SK-N-SH (cell line): ENCODE measurements at regions of chr12 and their contacts with region 1.

Region 1: DNA sequence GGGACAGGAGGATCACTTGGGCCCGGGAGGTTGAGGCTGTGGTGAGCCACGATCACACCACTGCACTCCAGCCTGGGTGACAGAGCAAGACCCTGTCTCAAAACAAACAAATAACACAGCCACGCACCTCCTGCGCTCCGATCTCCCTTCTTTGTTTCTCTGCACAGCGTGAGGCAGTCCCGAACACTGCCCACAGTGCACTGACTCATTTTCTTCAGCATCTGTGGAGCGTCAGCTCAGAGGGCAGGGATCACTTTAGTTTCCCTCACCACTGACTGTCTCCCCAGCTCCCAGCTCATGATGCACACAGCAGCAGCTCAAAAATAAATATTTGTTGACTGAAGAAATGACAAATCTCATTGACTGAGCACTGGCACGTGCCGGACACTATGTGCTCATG is 883 bp upstream of the MYL2 start:
- DNase-seq: no peak
- H3K4me3 ChIP-seq: no peak overlapping the region
- H3K27ac ChIP-seq: no peak overlapping the region
- H3K4me1 ChIP-seq: peaks cover 0 to 10% of the 10 kb centered on the region in 2 experiments; a peak in 1 of 4 replicates
- H3K27me3 ChIP-seq: no peaks in the 10 kb centered on the region
- CTCF ChIP-seq: no peak
- EP300 ChIP-seq: no peak
- RAD21 ChIP-seq: no peak

Region 2: DNA sequence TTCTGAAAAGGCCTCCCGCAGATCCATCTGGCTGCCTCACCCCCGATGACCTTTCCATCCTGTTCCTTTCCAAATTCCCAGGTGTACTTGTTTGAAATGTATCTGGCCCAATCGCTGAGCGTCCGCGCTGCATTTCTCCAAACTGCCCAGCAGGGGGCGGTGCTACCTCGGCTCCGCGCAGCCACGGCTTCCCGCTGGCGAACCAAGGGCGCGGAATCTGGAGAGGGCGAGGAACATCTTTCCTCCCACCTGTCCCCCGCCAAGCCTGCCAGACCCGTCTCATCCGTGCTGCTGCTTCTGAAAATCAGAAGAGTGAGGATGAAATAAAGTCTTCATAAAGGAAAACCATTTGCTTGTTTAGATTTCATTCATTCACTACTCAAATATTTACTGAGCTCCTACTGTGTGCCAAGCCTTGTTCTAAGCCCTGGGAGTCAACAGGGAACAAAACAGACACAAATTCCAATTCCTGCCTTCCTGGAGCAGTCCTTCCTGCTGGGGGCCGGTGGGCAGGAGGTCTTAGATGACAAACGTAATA is 15.9 kb after region 1 on chr12:
- CTCF ChIA-PET with region 1: interaction called, 13 read pairs
- POLR2A ChIA-PET with region 1: no interaction called
- DNase-seq: peak; percentile 85
- H3K4me3 ChIP-seq: peak overlapping the region in 1 of 2 experiments; percentile 48; a peak in 1 of 4 replicates
- H3K27ac ChIP-seq: no peak overlapping the region
- H3K4me1 ChIP-seq: no peaks in the 10 kb centered on the region; a peak in 1 of 4 replicates
- H3K27me3 ChIP-seq: no peaks in the 10 kb centered on the region
- CTCF ChIP-seq: peak; percentile 93
- EP300 ChIP-seq: no peak
- RAD21 ChIP-seq: peak; percentile 89